Activated CD4-positive, alpha-beta T cell treated with anti-CD3 and anti-CD28 coated beads, Interleukin-2, amount 10 ng/mL, durations not matched to agents 24 days and 14 days (primary cell): ENCODE measurements at regions of chr4 and their contacts with region 1.

Region 1: DNA sequence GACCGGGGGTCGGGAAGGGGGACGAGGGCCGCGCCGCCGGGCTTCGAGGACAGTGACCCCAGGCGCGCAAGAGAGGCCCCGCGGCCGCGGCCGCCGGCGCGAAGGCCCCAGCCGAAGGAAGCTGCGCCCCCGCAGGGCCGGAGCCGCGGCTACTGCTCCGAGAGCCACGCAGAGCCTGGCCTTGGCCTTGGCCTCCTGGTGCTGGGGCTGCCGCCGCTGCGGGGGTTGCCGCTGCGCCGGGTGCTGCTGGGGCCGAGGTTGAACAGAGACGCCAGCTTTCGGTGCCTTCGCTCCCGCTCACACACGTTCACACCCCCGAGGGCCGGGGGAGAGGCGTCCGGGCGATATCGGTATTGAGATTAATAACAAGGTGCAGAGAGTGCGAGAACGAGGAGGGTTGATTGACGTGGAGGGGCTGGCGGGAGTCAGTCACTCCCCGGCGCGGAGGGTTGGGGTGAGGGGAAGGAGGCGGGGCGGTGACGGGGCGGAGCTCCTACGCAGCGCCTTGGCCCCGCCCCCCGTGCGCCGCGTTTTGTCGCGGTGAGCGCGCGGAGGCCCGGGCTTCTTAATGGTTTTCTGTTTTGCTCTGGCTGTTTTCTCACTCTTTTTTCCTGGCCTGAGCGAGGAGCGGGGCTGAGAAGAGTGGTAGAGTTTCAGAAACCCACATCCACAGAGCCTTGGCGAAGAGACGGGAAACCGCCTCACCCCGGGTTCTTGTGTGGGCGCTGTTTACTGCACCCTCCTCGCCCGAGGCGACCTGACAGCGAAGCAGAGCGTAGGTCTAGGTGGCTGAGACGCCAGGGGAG is 878 bp upstream of the CNOT6L start:
- DNase-seq: peak; percentile 98
- H3K4me3 Mint-ChIP-seq: peak overlapping the region; percentile 97
- H3K27ac Mint-ChIP-seq: peak overlapping the region; percentile 100
- H3K4me1 Mint-ChIP-seq: peaks cover 38% of the 10 kb centered on the region
- H3K27me3 Mint-ChIP-seq: peaks cover 1% of the 10 kb centered on the region

Region 2: DNA sequence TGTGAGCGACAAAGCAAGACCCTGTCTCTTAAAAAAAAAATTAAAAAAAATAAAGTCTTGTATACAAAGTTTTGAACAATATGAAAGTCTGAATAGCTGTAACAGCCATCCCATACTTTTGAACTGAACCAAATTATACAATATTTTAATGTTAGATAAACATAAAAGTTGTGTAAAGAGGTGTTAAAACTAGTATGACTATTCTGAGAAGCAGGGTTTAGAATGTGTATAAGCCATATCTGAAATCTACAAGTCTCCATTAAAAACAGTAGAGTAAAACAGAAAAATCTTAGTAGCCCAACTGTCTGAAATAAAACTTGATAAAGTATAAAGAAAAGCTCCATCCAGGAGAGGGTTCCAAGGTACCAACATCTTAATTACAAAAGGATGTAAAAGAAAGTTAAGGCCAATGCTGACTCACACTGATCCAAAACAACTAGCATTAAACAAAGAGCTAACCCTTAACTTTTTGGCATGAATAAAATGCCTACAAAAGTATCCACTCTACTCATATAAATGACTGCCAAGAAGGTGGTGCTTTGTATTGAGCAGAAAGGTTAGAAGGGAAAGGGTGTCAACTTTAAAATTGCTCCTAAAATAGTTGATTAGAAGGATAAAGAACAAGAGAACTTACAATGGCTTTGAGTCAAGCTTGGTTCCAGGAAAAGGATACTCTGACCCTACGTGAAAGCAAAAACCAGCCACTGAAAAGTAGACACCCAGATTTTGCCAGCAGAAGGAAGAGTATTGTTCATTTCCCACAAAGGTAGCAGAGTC is 19.4 kb before region 1 on chr4:
- intact Hi-C with region 1: loop called (anchors 1 kb)
- DNase-seq: peak; percentile 63
- H3K4me3 Mint-ChIP-seq: peak overlapping the region; percentile 73
- H3K27ac Mint-ChIP-seq: peak overlapping the region; percentile 84
- H3K4me1 Mint-ChIP-seq: peaks cover 40% of the 10 kb centered on the region
- H3K27me3 Mint-ChIP-seq: no peaks in the 10 kb centered on the region

Region 3: GRCh38 chr4:77852892-77853495 is 32.9 kb after region 1 on chr4:
- intact Hi-C with region 1: loop called (anchors 1 kb)
- DNase-seq: peak; percentile 93
- H3K4me3 Mint-ChIP-seq: peak overlapping the region; percentile 85
- H3K27ac Mint-ChIP-seq: peak overlapping the region; percentile 99
- H3K4me1 Mint-ChIP-seq: peaks cover 51% of the 10 kb centered on the region
- H3K27me3 Mint-ChIP-seq: no peaks in the 10 kb centered on the region

Region 4: GRCh38 chr4:77959566-77960338 is 139.7 kb after region 1 on chr4:
- intact Hi-C with region 1: loop called (anchors 5 kb)
- DNase-seq: peak; percentile 61
- H3K4me3 Mint-ChIP-seq: no peak overlapping the region
- H3K27ac Mint-ChIP-seq: no peak overlapping the region
- H3K4me1 Mint-ChIP-seq: peaks cover 6% of the 10 kb centered on the region
- H3K27me3 Mint-ChIP-seq: no peaks in the 10 kb centered on the region

Region 5: GRCh38 chr4:78336093-78336943 is 516.3 kb after region 1 on chr4:
- intact Hi-C with region 1: no loop called
- DNase-seq: no peak
- H3K4me3 Mint-ChIP-seq: no peak overlapping the region
- H3K27ac Mint-ChIP-seq: no peak overlapping the region
- H3K4me1 Mint-ChIP-seq: no peaks in the 10 kb centered on the region
- H3K27me3 Mint-ChIP-seq: peaks cover 23% of the 10 kb centered on the region

Region 6: GRCh38 chr4:78775303-78776030 is 955.4 kb after region 1 on chr4:
- intact Hi-C with region 1: loop called (anchors 10 kb)
- DNase-seq: peak; percentile 97
- H3K4me3 Mint-ChIP-seq: peak overlapping the region; percentile 93
- H3K27ac Mint-ChIP-seq: peak overlapping the region; percentile 98
- H3K4me1 Mint-ChIP-seq: peaks cover 34% of the 10 kb centered on the region
- H3K27me3 Mint-ChIP-seq: no peaks in the 10 kb centered on the region

Region 7: GRCh38 chr4:79603681-79604080 is 1783.6 kb after region 1 on chr4:
- intact Hi-C with region 1: no loop called
- DNase-seq: no peak
- H3K4me3 Mint-ChIP-seq: peak overlapping the region; percentile 30
- H3K27ac Mint-ChIP-seq: no peak overlapping the region
- H3K4me1 Mint-ChIP-seq: peaks cover 5% of the 10 kb centered on the region
- H3K27me3 Mint-ChIP-seq: peaks cover 3% of the 10 kb centered on the region